Common myeloid progenitor, CD34-positive (primary cell): ENCODE measurements at regions of chr5 and their contacts with region 1.

Region 1: DNA sequence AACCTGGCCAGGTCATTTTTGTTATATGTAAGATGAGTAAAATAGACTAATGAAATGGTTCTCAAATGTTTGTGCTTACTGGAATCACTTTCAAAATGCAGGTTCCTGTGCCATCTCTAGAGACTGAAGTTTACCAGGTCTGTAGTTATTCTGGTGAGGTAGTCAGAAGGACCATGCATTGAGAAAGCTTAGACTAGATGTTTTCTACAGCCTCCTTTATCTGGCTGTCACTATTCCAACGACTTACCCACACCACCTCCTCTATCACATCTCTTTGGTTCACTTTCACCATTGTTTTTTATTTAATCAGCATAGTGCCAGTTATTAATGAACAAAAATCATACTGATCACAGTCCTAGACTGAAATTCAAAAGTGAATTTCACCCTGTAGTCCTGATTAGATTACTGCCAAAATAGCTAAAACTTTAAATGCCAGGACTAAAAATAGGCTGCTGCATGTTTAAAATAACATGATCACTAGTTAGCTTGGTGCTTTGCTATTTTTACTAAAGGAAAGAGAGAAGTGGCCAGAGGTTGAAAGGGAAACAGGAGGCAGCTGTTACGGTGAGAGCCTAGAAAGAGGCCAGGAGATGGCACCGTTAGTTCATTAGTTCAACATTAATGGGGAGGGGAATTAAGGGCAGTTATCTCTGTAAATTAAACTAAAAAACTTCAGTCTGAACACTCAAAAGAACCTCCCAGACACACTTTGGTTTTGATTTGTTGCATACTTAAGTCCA is 13.9 kb upstream of the FNIP1 start:
- DNase-seq: peak; percentile 53 to 79 (median 76)
- H3K4me3 ChIP-seq: no peak overlapping the region
- H3K27ac ChIP-seq: no peak overlapping the region
- H3K4me1 ChIP-seq: peaks cover 0 to 5% (median 2%) of the 10 kb centered on the region in 4 experiments
- H3K27me3 ChIP-seq: no peaks in the 10 kb centered on the region

Region 2: DNA sequence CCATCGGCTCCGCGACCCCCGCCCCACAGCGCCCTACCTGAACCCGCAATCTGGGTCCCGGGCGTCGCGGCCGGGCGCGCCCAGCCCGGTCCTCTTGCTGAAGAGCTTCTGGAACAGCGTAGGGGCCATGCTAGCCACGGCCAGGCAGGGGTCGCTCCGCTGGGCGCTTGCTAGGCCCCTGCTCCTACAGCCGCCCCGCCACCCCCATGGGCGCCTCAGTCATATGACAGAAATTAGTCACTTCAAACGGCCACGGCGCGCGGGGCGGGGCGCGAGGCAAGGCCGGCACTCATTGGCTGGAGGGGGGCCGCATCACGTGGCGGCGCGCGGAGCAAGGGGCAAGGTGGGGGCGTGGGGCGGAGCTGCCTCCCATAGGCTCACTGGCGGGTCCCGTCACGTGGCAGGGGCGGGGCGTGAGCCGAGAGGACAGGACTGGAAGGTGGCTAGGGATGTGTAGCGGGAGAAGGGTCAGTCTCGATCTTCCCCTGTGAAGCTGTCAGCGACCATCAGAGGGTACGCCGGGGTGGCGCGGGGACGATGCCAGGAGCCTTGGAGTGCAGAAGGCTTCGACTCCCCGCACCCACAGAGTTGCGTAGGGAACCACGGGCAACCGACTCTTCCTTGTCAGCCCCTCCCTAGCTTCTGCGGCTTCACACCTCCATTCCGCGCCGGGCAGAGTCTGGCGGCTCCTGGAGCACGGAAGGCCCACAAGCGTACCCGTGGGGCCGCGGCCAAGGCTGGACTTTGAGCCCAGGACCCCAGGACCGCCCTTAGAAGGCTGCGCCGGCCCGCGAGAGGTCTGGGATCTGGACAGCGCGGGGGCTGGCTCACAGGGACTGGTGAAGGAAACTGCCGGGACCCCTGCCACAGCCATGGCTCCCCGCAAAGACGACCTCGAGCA is 13.6 kb before region 1 on chr5 and contains the start of gene FNIP1:
- CTCF ChIA-PET with region 1: interaction called, 13 read pairs
- POLR2A ChIA-PET with region 1: interaction called, 4 read pairs
- DNase-seq: peak; percentile 98 to 99 (median 98)
- H3K4me3 ChIP-seq: peak within 1 kb of the TSS; percentile 86 to 100 (median 96)
- H3K27ac ChIP-seq: peak within 1 kb of the TSS; percentile 98 to 99
- H3K4me1 ChIP-seq: peaks cover 17 to 36% (median 27%) of the 10 kb centered on the region in 4 experiments
- H3K27me3 ChIP-seq: no peaks in the 10 kb centered on the region

Region 3: DNA sequence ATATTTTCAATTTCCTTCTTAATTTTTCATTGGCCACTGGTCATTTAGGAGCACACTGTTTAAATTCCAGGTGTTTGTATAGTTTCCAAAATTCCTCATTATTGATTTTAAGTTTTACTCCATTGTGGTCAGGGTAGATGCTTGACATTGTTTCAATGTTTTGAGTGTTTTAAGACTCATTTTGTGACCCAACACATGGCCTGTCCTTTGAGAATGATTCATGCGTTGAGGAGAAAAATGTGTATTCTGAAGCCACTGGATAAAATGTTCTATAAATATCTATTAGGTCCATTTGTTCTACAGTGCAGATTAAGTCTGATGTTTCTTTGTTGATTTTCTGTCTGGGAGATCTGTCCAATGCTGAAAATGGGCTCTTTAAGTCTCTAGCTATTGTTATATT is 10.5 kb after region 1 on chr5:
- CTCF ChIA-PET with region 1: no interaction called
- POLR2A ChIA-PET with region 1: no interaction called
- DNase-seq: no peak
- H3K4me3 ChIP-seq: no peak overlapping the region
- H3K27ac ChIP-seq: no peak overlapping the region
- H3K4me1 ChIP-seq: peaks cover 0 to 2% (median 0%) of the 10 kb centered on the region in 4 experiments
- H3K27me3 ChIP-seq: no peaks in the 10 kb centered on the region

Region 4: DNA sequence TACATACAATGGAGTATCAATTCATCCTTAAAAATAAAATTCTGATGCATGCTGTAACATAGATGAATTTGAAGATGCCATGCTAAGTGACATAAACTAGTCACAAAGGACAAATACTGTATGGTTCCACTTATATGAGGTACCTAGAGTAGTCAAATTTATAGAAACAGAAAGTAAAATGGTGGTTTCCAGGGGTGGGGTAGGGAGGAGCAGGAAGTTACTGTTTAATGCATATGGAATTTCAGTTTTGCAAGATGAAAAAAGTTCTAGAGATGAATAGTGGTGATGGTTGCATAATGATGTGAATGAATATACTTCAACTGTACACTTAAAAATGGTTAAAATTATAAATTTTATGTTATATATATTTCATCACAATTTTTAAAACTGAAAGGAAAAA is 43.5 kb after region 1 on chr5:
- CTCF ChIA-PET with region 1: no interaction called
- POLR2A ChIA-PET with region 1: no interaction called
- DNase-seq: no peak
- H3K4me3 ChIP-seq: no peak overlapping the region
- H3K27ac ChIP-seq: no peak overlapping the region
- H3K4me1 ChIP-seq: no peaks in the 10 kb centered on the region
- H3K27me3 ChIP-seq: no peaks in the 10 kb centered on the region

Region 5: GRCh38 chr5:132001647-132002561 is 191.2 kb after region 1 on chr5:
- CTCF ChIA-PET with region 1: interaction called, 85 read pairs
- POLR2A ChIA-PET with region 1: no interaction called
- DNase-seq: no peak
- H3K4me3 ChIP-seq: no peak overlapping the region
- H3K27ac ChIP-seq: no peak overlapping the region
- H3K4me1 ChIP-seq: peaks cover 7 to 67% (median 59%) of the 10 kb centered on the region in 4 experiments
- H3K27me3 ChIP-seq: peaks cover 0 to 2% (median 0%) of the 10 kb centered on the region in 5 experiments